Endothelial cell of umbilical vein (primary cell): ENCODE measurements at regions of chr2 and their contacts with region 1.

Region 1: GRCh38 chr2:134207564-134208209 is 46.2 kb upstream of the MGAT5 start:
- DNase-seq: peak; percentile 69
- H3K4me3 ChIP-seq: no peak overlapping the region
- H3K27ac ChIP-seq: no peak overlapping the region
- H3K4me1 ChIP-seq: peaks cover 5% of the 10 kb centered on the region
- H3K27me3 ChIP-seq: no peaks in the 10 kb centered on the region
- CTCF ChIP-seq: peak; percentile 75 to 85
- POLR2A ChIP-seq: no peak

Region 2: GRCh38 chr2:133886735-133887660 is 320.7 kb before region 1 on chr2:
- CTCF ChIA-PET with region 1: interaction called, 20 read pairs
- POLR2A ChIA-PET with region 1: no interaction called
- dilution Hi-C with region 1: no loop called
- intact Hi-C with region 1: loop called (anchors 5 kb)
- DNase-seq: peak; percentile 61
- H3K4me3 ChIP-seq: no peak overlapping the region
- H3K27ac ChIP-seq: no peak overlapping the region
- H3K4me1 ChIP-seq: peaks cover 6% of the 10 kb centered on the region
- H3K27me3 ChIP-seq: peaks cover 0 to 26% of the 10 kb centered on the region in 2 experiments
- CTCF ChIP-seq: peak; percentile 60 to 65
- POLR2A ChIP-seq: no peak

Region 3: DNA sequence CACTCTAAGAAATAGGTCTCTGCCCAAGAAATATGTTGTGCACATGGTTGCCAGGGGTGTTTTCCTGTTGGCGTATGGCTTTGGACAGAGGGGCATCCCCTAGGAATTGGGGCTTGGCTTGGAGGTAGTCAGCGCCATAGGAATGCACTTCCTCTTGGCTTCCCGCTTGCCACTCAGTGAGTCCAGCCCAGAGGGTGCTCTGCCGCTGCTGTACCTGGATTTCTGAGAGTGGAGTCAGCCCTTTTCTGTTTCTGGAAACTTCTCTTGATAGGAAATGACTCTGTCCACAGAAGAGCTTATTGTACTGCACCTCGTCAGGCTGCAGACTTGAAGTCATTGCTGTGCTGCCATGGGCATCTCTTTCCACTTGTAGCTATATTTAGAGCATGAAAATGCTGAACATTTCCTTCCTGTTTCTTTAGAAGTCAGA is 70.5 kb before region 1 on chr2:
- CTCF ChIA-PET with region 1: interaction called, 13 read pairs
- POLR2A ChIA-PET with region 1: no interaction called
- dilution Hi-C with region 1: no loop called
- intact Hi-C with region 1: no loop called
- DNase-seq: peak; percentile 84
- H3K4me3 ChIP-seq: peak overlapping the region in 1 of 3 experiments; percentile 34
- H3K27ac ChIP-seq: peak overlapping the region; percentile 85
- H3K4me1 ChIP-seq: peaks cover 26% of the 10 kb centered on the region
- H3K27me3 ChIP-seq: no peaks in the 10 kb centered on the region
- CTCF ChIP-seq: no peak
- POLR2A ChIP-seq: no peak

Region 4: GRCh38 chr2:134261398-134262131 is 53.9 kb after region 1 on chr2:
- CTCF ChIA-PET with region 1: no interaction called
- POLR2A ChIA-PET with region 1: no interaction called
- dilution Hi-C with region 1: no loop called
- intact Hi-C with region 1: no loop called
- DNase-seq: peak; percentile 72
- H3K4me3 ChIP-seq: no peak overlapping the region
- H3K27ac ChIP-seq: peak overlapping the region; percentile 36
- H3K4me1 ChIP-seq: peaks cover 25% of the 10 kb centered on the region
- H3K27me3 ChIP-seq: no peaks in the 10 kb centered on the region
- CTCF ChIP-seq: no peak
- POLR2A ChIP-seq: no peak